GM12878 (cell line): ENCODE measurements at regions of chr1 and their contacts with region 1.

Region 1: GRCh38 chr1:67561704-67562113 is 123.3 kb upstream of the GADD45A start:
- DNase-seq: peak; percentile 24
- ATAC-seq: peak; percentile 94
- H3K4me3 ChIP-seq: no peak overlapping the region
- H3K27ac ChIP-seq: no peak overlapping the region
- H3K4me1 ChIP-seq: no peaks in the 10 kb centered on the region; the same call in 1 of the 2 replicates
- H3K27me3 ChIP-seq: no peaks in the 10 kb centered on the region
- CTCF ChIP-seq: peak; percentile 82 to 88 (median 88)
- EP300 ChIP-seq: no peak
- POLR2A ChIP-seq: no peak
- RAD21 ChIP-seq: peak; percentile 93

Region 2: GRCh38 chr1:67535474-67535873 is 26.2 kb before region 1 on chr1:
- CTCF ChIA-PET with region 1: interaction called, 59 read pairs
- POLR2A ChIA-PET with region 1: no interaction called
- RAD21 ChIA-PET with region 1: interaction called, 9 read pairs
- SMC1A ChIA-PET with region 1: interaction called, 14 read pairs
- in situ Hi-C with region 1: no loop called
- intact Hi-C with region 1: no loop called
- DNase-seq: peak; percentile 9
- ATAC-seq: peak; percentile 90
- H3K4me3 ChIP-seq: no peak overlapping the region
- H3K27ac ChIP-seq: no peak overlapping the region
- H3K4me1 ChIP-seq: no peaks in the 10 kb centered on the region
- H3K27me3 ChIP-seq: no peaks in the 10 kb centered on the region
- CTCF ChIP-seq: peak; percentile 66 to 77 (median 75)
- EP300 ChIP-seq: no peak
- POLR2A ChIP-seq: no peak
- RAD21 ChIP-seq: peak; percentile 65

Region 3: DNA sequence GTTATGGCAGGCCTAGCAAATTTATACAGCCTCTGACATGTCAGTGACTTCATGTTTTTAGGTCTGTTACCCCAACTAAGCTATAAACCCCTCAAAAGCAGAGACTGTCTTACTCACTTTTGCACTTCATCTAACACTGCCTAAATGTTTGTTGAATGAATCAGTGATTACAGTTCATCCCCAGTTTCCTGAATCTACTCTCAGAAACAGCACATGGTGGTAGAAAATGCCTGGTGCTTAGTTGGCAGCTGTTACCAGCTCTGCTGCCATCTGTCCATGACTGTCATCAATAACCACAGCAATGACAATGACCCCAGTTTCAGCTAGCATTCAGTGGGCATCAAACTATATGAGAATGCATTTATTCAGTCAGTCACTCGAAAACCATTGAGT is 21.0 kb before region 1 on chr1:
- CTCF ChIA-PET with region 1: interaction called, 59 read pairs
- POLR2A ChIA-PET with region 1: no interaction called
- RAD21 ChIA-PET with region 1: interaction called, 9 read pairs
- SMC1A ChIA-PET with region 1: interaction called, 14 read pairs
- in situ Hi-C with region 1: no loop called
- intact Hi-C with region 1: no loop called
- DNase-seq: no peak
- ATAC-seq: no peak
- H3K4me3 ChIP-seq: no peak overlapping the region
- H3K27ac ChIP-seq: no peak overlapping the region
- H3K4me1 ChIP-seq: no peaks in the 10 kb centered on the region
- H3K27me3 ChIP-seq: peaks cover 0 to 1% of the 10 kb centered on the region in 2 experiments; a peak in 1 of 4 replicates
- CTCF ChIP-seq: no peak
- EP300 ChIP-seq: no peak
- POLR2A ChIP-seq: no peak
- RAD21 ChIP-seq: no peak

Region 4: DNA sequence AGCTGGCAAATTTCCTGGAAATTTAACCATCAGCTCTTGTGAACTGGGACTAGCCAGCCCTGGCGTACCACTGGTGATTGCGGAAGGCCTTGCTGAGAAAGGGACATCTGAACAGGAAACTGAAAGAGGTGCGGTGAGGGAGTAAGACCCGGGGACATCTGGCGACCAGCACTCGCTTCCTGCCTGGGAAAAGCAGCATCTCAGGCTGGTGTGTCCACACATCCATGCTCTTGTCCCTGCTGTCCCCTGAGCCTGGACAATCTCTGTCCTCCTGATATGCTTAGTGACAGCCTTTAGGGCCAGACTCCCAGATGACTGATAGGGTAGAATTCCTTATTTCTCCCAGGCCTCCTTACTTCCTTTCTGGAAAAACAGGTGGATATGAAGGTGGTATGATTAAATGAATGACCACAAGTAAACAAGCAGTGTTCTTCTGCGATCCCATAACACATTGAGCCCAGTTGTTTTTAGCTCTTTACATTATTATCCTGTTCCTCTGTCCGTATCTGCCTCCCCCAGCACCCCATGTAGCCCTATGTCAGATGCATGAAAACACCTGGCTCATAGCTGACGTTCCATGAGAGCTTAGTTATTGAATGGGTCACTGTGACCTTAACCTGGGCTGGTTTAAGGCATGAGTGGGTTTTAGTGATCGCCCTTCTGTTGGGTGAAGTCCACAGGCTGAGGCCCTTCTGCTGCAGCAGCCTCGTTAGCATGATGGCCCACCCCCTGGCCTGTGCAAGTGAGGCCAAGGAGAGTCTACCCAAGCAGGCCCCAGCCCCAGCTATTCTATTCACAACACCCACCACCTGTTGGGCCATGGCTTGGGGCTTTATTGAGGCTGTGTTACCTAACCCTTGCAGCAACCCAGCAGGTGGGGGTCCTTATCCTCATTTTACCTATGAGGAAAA is 47.2 kb after region 1 on chr1:
- CTCF ChIA-PET with region 1: interaction called, 4 read pairs
- POLR2A ChIA-PET with region 1: no interaction called
- RAD21 ChIA-PET with region 1: interaction called, 8 read pairs
- SMC1A ChIA-PET with region 1: interaction called, 20 read pairs
- in situ Hi-C with region 1: no loop called
- intact Hi-C with region 1: no loop called
- DNase-seq: peak; percentile 5
- ATAC-seq: peak; percentile 45
- H3K4me3 ChIP-seq: no peak overlapping the region
- H3K27ac ChIP-seq: no peak overlapping the region
- H3K4me1 ChIP-seq: no peaks in the 10 kb centered on the region
- H3K27me3 ChIP-seq: no peaks in the 10 kb centered on the region
- CTCF ChIP-seq: no peak
- EP300 ChIP-seq: no peak
- POLR2A ChIP-seq: no peak
- RAD21 ChIP-seq: no peak

Region 5: DNA sequence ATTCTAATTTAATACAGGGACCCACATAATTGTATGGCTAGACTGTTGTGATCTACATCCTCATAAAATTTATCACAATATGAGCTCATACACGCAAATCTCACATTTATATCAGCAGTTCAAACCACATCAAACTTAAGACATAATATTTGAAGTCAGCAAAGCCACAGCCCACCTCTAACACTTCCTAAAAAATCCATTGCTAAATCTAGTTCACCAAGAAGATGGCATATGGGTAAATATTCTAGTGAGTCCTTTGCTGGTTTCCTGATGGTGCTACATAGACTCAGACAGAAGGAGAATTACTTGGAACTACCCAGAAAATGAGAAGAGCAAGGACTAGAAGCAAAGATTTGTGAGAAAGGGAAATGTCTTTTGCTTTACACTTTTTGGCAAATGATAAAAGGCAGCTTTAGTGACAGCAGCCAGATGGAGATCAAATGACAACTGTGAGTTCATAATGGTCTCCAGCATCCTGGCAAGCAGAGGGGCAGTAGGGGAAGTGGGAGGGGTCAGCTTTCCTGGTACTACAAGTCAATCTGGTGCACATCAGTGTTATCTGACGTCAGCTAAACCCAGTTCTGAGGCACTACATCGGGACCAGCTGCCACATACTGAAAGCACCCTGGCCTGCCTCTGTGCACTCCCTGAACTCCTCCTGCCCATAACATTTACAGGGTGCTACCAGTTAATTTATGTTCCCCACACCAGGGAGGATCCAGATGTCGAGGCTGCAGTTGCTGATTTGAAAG is 112.7 kb after region 1 on chr1:
- CTCF ChIA-PET with region 1: interaction called, 24 read pairs
- POLR2A ChIA-PET with region 1: interaction called, 3 read pairs
- RAD21 ChIA-PET with region 1: interaction called, 16 read pairs
- SMC1A ChIA-PET with region 1: interaction called, 26 read pairs
- in situ Hi-C with region 1: no loop called
- intact Hi-C with region 1: no loop called
- DNase-seq: no peak
- ATAC-seq: peak; percentile 84
- H3K4me3 ChIP-seq: no peak overlapping the region
- H3K27ac ChIP-seq: no peak overlapping the region
- H3K4me1 ChIP-seq: no peaks in the 10 kb centered on the region
- H3K27me3 ChIP-seq: no peaks in the 10 kb centered on the region
- CTCF ChIP-seq: no peak
- EP300 ChIP-seq: no peak
- POLR2A ChIP-seq: no peak
- RAD21 ChIP-seq: no peak